A549 (cell line): ENCODE measurements at regions of chr1 and their contacts with region 1.

Region 1: GRCh38 chr1:23210351-23210785 is 6.9 kb downstream of the HTR1D start:
- DNase-seq: peak in 1 of 2 experiments; percentile 69
- ATAC-seq: peak; percentile 78 to 84
- H3K4me3 ChIP-seq: no peak overlapping the region
- H3K27ac ChIP-seq: peak overlapping the region; percentile 4 to 65; a peak in 5 of 6 replicates
- H3K4me1 ChIP-seq: peaks cover 53% of the 10 kb centered on the region
- CTCF ChIP-seq: peak; percentile 26; the same call in 1 of the 3 replicates
- EP300 ChIP-seq: no peak
- POLR2A ChIP-seq: no peak
- RAD21 ChIP-seq: peak; percentile 39 to 51; a peak in 3 of 5 replicates

Region 2: GRCh38 chr1:22654692-22655091 is 555.7 kb before region 1 on chr1:
- CTCF ChIA-PET with region 1: no interaction called
- POLR2A ChIA-PET with region 1: no interaction called
- DNase-seq: peak; percentile 25 to 45
- ATAC-seq: peak; percentile 64 to 85; a peak in 4 of 6 replicates
- H3K4me3 ChIP-seq: no peak overlapping the region
- H3K27ac ChIP-seq: no peak overlapping the region
- H3K4me1 ChIP-seq: no peaks in the 10 kb centered on the region
- CTCF ChIP-seq: no peak
- EP300 ChIP-seq: no peak
- POLR2A ChIP-seq: no peak
- RAD21 ChIP-seq: no peak

Region 3: DNA sequence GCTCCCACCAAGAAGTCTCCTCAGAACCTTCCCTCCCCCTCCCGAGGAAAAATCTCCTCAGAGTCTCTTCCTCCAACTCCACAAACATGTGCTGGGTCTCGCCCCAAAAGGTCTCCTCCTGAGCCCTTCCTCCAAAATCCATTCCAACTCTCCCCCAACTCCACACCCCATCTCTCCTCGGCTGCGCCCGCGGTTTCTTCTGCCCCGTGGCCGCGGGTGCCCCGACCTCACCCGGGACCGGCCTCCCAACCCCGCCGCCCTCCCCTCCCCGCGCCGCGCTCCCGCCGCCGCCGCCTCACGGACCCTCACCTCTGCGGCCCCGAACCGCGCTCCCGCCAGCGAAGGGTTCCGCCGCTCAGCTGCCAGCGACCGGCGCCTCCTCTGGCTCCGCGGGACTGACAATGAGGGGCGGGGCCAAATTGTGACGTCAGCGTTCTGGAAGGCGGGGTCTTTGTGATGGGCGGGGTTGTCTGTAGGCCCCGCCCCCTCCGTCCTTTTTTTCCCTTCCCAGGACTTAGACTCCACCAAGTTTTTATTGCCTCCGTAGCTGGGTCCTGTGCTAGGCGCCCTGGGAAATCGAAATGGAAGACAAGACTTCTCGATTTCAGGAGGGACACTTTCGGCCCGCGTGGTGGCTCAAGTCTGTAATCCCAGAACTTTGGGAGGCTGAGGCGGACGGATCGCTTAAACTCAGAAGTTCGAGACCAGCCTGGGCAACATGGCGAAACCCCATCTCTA is 41.7 kb before region 1 on chr1 and contains the start of gene LUZP1:
- CTCF ChIA-PET with region 1: no interaction called
- POLR2A ChIA-PET with region 1: interaction called, 16 read pairs
- DNase-seq: peak in 1 of 2 experiments; percentile 84
- ATAC-seq: peak; percentile 81 to 83
- H3K4me3 ChIP-seq: peak within 1 kb of the TSS; percentile 95
- H3K27ac ChIP-seq: peak within 1 kb of the TSS; percentile 89 to 98
- H3K4me1 ChIP-seq: peaks cover 31% of the 10 kb centered on the region
- CTCF ChIP-seq: no peak
- EP300 ChIP-seq: no peak
- POLR2A ChIP-seq: peak; percentile 71
- RAD21 ChIP-seq: no peak
- polyA plus RNA-seq, gene LUZP1: 18.3 and 26.2 TPM in 2 replicates

Region 4: GRCh38 chr1:23224714-23225648 is 14.6 kb after region 1 on chr1:
- CTCF ChIA-PET with region 1: interaction called, 13 read pairs
- POLR2A ChIA-PET with region 1: no interaction called
- DNase-seq: no peak
- ATAC-seq: peak in 1 of 2 experiments; percentile 75; a peak in 3 of 6 replicates
- H3K4me3 ChIP-seq: no peak overlapping the region
- H3K27ac ChIP-seq: peak overlapping the region; percentile 54 to 72
- H3K4me1 ChIP-seq: peaks cover 16% of the 10 kb centered on the region
- CTCF ChIP-seq: no peak
- EP300 ChIP-seq: no peak
- POLR2A ChIP-seq: no peak
- RAD21 ChIP-seq: no peak

Region 5: GRCh38 chr1:23249787-23250454 is 39.6 kb after region 1 on chr1:
- CTCF ChIA-PET with region 1: no interaction called
- POLR2A ChIA-PET with region 1: no interaction called
- DNase-seq: no peak
- ATAC-seq: no peak
- H3K4me3 ChIP-seq: no peak overlapping the region
- H3K27ac ChIP-seq: peak overlapping the region in 1 of 2 experiments; percentile 36; a peak in 1 of 6 replicates
- H3K4me1 ChIP-seq: peaks cover 18% of the 10 kb centered on the region
- CTCF ChIP-seq: no peak
- EP300 ChIP-seq: no peak
- POLR2A ChIP-seq: no peak
- RAD21 ChIP-seq: no peak